GM18951 (cell line): ENCODE measurements at regions of chr1 and their contacts with region 1.

Region 1: GRCh38 chr1:202462342-202463076 is 114.0 kb downstream of the PPP1R12B start:
- POLR2A ChIP-seq: no peak

Region 2: GRCh38 chr1:202710070-202711045 is 247.8 kb after region 1 on chr1 and contains the start of gene SYT2:
- in situ Hi-C with region 1: loop called (anchors 25 kb)
- POLR2A ChIP-seq: no peak

Region 3: DNA sequence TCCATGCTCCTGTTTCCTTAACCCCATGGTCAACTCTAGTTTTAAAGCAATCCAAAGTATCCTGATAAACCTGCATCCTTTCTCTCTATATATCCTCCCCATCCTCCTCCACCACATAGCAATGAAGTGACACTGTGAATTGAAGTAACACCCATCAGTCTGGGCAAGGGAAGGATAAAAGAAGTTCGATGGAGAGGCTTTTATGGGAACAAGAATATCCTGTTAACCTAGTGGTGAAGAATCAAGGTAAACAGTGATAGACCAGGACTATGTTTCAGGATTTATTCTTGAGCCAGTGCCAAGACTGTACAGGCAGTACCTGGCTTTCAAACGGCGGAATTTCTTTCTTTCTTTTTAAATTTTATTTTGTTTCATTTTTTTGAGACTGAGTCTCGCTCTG is 408.9 kb after region 1 on chr1:
- in situ Hi-C with region 1: no loop called
- POLR2A ChIP-seq: no peak